Naive thymus-derived CD4-positive, alpha-beta T cell (primary cell): ENCODE measurements at regions of chr19 and their contacts with region 1.

Region 1: DNA sequence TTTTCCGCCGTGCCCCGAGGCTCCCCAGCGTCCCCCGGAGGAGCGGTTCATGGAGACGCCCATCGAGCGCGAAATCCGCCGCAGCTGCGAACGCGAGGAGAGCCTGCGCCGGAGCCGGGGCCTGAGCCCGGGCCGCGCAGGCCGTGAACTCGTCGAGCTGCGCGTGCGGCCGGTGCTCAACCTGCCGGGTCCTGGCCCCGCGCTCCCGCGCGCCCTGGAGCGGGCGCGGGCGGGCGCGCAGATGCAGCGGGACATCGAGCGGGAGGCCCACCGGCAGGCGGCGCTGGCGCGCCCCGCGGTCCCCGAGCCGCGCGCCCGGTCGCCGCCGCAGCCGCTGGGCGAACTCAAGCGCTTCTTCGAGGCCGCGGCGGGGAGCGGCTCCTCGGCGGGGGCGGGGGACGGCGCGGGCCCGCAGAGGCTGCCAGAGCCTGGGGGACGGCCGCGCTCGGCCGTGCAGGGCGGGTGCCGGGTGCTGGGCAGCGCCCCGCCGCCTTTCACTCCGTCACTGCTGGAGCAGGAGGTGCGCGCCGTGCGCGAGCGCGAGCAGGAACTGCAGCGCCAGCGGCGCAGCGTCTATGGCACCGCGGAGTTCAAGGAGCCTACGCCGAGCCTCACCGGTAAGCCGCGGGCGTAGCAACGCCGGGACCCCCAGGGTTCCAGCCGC is 807 bp downstream of the MISP3 start:
- DNase-seq: peak; percentile 65 to 91 (median 87)
- ATAC-seq: peak; percentile 86
- H3K4me3 ChIP-seq: peak overlapping the region; percentile 91
- H3K4me3 Mint-ChIP-seq: peak overlapping the region; percentile 87 to 99 (median 93)
- H3K27ac ChIP-seq: peak overlapping the region; percentile 50
- H3K27ac Mint-ChIP-seq: peak overlapping the region in 7 of 9 donors; percentile 62 to 89 (median 78)
- H3K4me1 ChIP-seq: peaks cover 9 to 18% of the 10 kb centered on the region in 2 donors
- H3K4me1 Mint-ChIP-seq: peaks cover 7 to 24% (median 10%) of the 10 kb centered on the region in 7 donors
- H3K27me3 ChIP-seq: no peaks in the 10 kb centered on the region
- H3K27me3 Mint-ChIP-seq: peaks cover 0 to 10% (median 0%) of the 10 kb centered on the region in 5 donors

Region 2: GRCh38 chr19:13905938-13906904 is 167.2 kb before region 1 on chr19 and contains the starts of genes BRME1 and CC2D1A:
- CTCF ChIA-PET with region 1: interaction called, 4 read pairs
- POLR2A ChIA-PET with region 1: no interaction called
- intact Hi-C with region 1: loop called in 1 of 2 experiments (anchors 1 kb)
- DNase-seq: peak; percentile 87 to 94 (median 92)
- ATAC-seq: peak; percentile 100
- H3K4me3 ChIP-seq: peak within 1 kb of the TSS; percentile 84
- H3K4me3 Mint-ChIP-seq: peak within 1 kb of the TSS; percentile 84 to 94 (median 88)
- H3K27ac ChIP-seq: peak within 1 kb of the TSS; percentile 77
- H3K27ac Mint-ChIP-seq: peak within 1 kb of the TSS; percentile 83 to 94 (median 91)
- H3K4me1 ChIP-seq: peaks cover 12% of the 10 kb centered on the region in 2 donors
- H3K4me1 Mint-ChIP-seq: peaks cover 12 to 29% (median 16%) of the 10 kb centered on the region in 7 donors
- H3K27me3 ChIP-seq: no peaks in the 10 kb centered on the region
- H3K27me3 Mint-ChIP-seq: no peaks in the 10 kb centered on the region
- total RNA-seq, gene BRME1: 1.8 to 13.7 (median 2.9) TPM
- total RNA-seq, gene CC2D1A: 21.0 to 33.1 (median 29.8) TPM

Region 3: DNA sequence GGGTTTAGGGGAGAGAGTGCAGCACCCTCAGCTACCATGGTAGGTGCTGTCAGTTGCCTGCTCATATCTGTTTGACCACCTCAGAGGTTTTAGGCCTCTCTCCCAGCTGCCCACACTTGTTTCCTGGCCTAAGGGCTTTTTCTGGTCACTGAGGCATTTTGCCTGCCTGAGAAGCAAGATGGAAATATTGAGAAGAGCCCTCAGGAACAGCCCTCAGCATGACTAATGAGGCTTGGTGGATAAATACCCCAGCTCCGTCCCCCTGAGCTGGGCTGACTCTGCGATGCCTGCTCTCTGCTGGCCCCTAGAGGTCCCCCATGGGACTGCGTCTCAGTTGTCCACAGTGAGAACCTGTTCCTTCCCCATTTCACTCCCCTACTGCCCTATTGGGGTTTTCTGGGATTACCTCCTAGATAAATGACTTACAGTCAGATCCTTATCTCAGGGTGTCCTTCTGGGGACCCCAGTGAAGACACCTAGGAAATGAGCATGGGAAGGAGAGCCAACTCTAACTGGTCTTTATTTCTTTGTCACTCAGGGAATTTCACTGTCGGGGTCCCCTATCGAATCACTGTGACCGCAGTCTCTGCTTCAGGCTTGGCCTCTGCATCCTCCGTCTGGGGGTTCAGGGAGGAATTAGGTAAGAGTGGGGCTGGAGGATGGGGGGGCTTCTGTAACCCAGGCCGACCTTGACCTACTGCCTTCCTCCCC is 24.8 kb before region 1 on chr19:
- CTCF ChIA-PET with region 1: interaction called, 4 read pairs
- POLR2A ChIA-PET with region 1: no interaction called
- intact Hi-C with region 1: loop called in 1 of 2 experiments (anchors 1 kb)
- DNase-seq: peak; percentile 46 to 80 (median 67)
- ATAC-seq: peak; percentile 96
- H3K4me3 ChIP-seq: no peak overlapping the region
- H3K4me3 Mint-ChIP-seq: no peak overlapping the region
- H3K27ac ChIP-seq: peak overlapping the region; percentile 42
- H3K27ac Mint-ChIP-seq: peak overlapping the region in 8 of 9 donors; percentile 21 to 77 (median 61)
- H3K4me1 ChIP-seq: peaks cover 0 to 4% of the 10 kb centered on the region in 2 donors
- H3K4me1 Mint-ChIP-seq: peaks cover 0 to 5% (median 0%) of the 10 kb centered on the region in 7 donors
- H3K27me3 ChIP-seq: no peaks in the 10 kb centered on the region
- H3K27me3 Mint-ChIP-seq: no peaks in the 10 kb centered on the region

Region 4: GRCh38 chr19:14091081-14091812 is 17.9 kb after region 1 on chr19:
- CTCF ChIA-PET with region 1: interaction called, 4 read pairs
- POLR2A ChIA-PET with region 1: interaction called, 4 read pairs
- intact Hi-C with region 1: loop called (anchors 1 to 2 kb)
- DNase-seq: peak; percentile 56 to 89 (median 84)
- ATAC-seq: peak; percentile 71
- H3K4me3 ChIP-seq: peak overlapping the region; percentile 99
- H3K4me3 Mint-ChIP-seq: peak overlapping the region; percentile 81 to 100 (median 98)
- H3K27ac ChIP-seq: peak overlapping the region; percentile 89
- H3K27ac Mint-ChIP-seq: peak overlapping the region; percentile 89 to 100 (median 98)
- H3K4me1 ChIP-seq: peaks cover 8 to 10% of the 10 kb centered on the region in 2 donors
- H3K4me1 Mint-ChIP-seq: peaks cover 13 to 21% (median 18%) of the 10 kb centered on the region in 7 donors
- H3K27me3 ChIP-seq: no peaks in the 10 kb centered on the region
- H3K27me3 Mint-ChIP-seq: no peaks in the 10 kb centered on the region

Region 5: GRCh38 chr19:14218620-14219330 is 145.4 kb after region 1 on chr19:
- CTCF ChIA-PET with region 1: no interaction called
- POLR2A ChIA-PET with region 1: no interaction called
- intact Hi-C with region 1: no loop called
- DNase-seq: no peak
- ATAC-seq: no peak
- H3K4me3 ChIP-seq: no peak overlapping the region
- H3K4me3 Mint-ChIP-seq: no peak overlapping the region
- H3K27ac ChIP-seq: no peak overlapping the region
- H3K27ac Mint-ChIP-seq: peak overlapping the region in 1 of 9 donors; percentile 29
- H3K4me1 ChIP-seq: no peaks in the 10 kb centered on the region
- H3K4me1 Mint-ChIP-seq: peaks cover 10 to 18% (median 14%) of the 10 kb centered on the region in 7 donors
- H3K27me3 ChIP-seq: no peaks in the 10 kb centered on the region
- H3K27me3 Mint-ChIP-seq: peaks cover 0 to 6% (median 0%) of the 10 kb centered on the region in 5 donors

Region 6: GRCh38 chr19:14689598-14690503 is 616.5 kb after region 1 on chr19 and contains the start of gene ZNF333:
- CTCF ChIA-PET with region 1: no interaction called
- POLR2A ChIA-PET with region 1: no interaction called
- intact Hi-C with region 1: loop called in 1 of 2 experiments (anchors 5 kb)
- DNase-seq: peak; percentile 92 to 99 (median 96)
- ATAC-seq: peak; percentile 94
- H3K4me3 ChIP-seq: peak within 1 kb of the TSS; percentile 93
- H3K4me3 Mint-ChIP-seq: peak within 1 kb of the TSS; percentile 81 to 99 (median 94)
- H3K27ac ChIP-seq: peak within 1 kb of the TSS; percentile 97
- H3K27ac Mint-ChIP-seq: peak within 1 kb of the TSS; percentile 93 to 100 (median 99)
- H3K4me1 ChIP-seq: peaks cover 6 to 16% of the 10 kb centered on the region in 2 donors
- H3K4me1 Mint-ChIP-seq: peaks cover 5 to 26% (median 23%) of the 10 kb centered on the region in 7 donors
- H3K27me3 ChIP-seq: no peaks in the 10 kb centered on the region
- H3K27me3 Mint-ChIP-seq: peaks cover 0 to 2% (median 0%) of the 10 kb centered on the region in 5 donors
- total RNA-seq, gene ZNF333: 15.4 to 56.3 (median 34.7) TPM